Cardiac septum (tissue), 1 donor: ENCODE measurements at regions of chr20 and their contacts with region 1.

Region 1: GRCh38 chr20:47389867-47390347 is 33.4 kb upstream of the ZMYND8 start:
- DNase-seq: no peak

Region 2: DNA sequence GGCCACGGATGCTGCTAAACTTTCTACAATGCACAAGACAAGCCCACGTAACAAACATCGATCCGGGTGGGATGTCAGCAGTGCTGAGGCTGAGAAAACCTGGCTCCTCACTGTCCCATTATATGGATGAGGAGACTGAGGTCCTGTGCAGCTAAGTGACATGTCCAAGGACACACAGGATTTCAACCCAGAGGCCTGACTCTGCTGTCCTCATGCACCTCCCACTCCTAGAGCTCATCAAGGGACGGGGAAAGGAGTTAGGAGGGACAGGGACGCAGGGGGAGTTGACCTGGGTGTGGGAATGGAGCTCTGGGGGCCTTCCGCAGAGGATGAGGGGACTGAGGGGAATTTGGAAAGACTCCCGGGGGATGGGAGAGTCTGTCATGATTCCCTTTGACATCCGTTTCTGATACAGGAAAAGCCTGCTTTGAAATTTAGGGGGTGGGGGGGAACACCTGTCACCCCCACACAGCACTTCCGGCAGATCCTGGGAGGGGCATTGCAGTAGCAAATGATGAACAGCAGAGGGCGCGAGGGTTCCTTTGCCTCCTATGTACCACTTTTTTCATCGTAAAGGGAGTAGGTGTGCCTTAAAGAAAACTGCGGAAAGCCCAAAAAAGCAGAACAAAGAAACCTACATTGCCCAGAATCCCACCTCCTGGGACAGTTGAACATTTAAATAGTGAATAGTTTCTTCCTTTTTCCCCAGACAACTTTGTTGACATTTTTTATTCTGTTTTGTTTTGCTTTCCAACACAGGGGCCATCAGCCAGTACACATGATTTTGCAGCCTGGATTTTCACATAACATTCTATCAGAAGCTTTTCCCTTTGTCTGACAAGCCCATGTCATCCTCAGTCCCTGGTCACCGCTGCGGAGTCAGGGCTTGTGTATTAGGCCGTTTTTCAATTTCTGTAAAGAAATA is 631.9 kb before region 1 on chr20:
- intact Hi-C with region 1: loop called (anchors 10 kb)
- DNase-seq: no peak

Region 3: GRCh38 chr20:47196091-47197081 is 193.5 kb before region 1 on chr20:
- intact Hi-C with region 1: loop called (anchors 2 kb)
- DNase-seq: peak; percentile 86

Region 4: DNA sequence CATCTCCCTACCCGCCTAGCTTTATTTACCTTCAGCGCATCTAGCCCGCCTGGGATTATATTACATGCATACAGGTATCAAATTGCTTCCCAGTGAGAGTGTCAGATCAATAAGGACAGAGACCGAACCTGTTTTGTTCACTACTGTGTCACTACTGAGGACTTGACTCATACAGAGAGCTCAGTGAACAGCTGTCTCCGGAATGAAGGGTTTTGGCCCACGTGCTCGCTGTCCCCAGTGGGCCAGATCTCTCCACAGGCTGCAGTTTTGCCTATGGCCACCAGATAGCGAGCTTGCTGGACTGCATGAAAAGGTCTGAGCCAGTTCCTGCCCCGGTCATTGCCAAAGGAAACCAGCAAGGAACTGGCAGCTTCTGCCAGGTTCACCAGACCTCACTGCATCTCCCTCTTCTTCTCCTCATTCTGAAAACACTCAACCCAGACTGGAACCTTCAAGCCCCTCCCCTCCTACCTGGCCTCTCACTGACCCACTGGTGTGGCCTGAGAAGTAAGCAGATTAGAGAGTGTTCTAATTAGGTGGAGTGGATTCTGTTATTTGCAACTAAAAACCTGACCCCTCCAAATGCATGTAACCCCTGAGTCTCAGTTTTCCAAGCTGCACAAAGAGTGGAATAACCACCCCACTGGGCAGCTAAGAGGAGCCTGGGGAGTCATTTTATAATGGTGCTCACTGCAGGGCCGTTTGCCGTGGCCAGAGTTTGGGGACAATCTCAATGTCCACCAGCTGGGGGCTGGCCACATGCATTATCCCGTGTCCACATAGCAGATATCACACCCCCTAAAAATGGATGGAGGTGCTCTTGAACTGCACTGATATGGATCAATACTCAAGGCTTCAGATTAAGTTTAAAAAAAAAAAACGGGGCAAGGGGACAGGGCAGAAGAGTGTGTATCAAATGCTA is 184.1 kb before region 1 on chr20:
- intact Hi-C with region 1: loop called (anchors 2 kb)
- DNase-seq: peak; percentile 89

Region 5: GRCh38 chr20:47501483-47502270 is 111.8 kb after region 1 on chr20 and contains the start of gene NCOA3:
- intact Hi-C with region 1: loop called (anchors 5 kb)
- DNase-seq: peak; percentile 97
- total RNA-seq, gene NCOA3: 18.6 TPM

Region 6: DNA sequence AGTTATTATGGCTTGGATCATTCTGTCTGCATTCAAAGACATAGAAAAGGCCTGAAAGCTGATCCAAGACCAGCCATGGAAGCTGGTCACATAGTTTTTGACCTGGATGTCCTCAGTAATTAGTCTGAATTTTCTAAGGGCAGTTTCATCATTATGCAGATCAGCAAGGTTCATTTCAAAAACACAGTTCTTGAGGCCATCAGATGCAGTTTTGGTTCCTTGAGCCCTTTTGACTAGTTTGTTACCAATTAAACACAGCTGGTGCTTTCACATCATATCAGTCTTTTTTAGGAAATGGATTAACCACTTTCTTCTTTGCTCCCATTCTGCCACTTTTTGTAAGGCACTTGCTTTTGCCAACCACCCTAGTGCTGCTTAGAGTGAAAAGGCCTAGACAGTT is 241.2 kb after region 1 on chr20:
- intact Hi-C with region 1: no loop called
- DNase-seq: no peak